Common myeloid progenitor, CD34-positive (primary cell): ENCODE measurements at regions of chr20 and their contacts with region 1.

Region 1: GRCh38 chr20:36808317-36809257 is 35.0 kb upstream of the DSN1 start:
- DNase-seq: peak; percentile 56 to 70 (median 60)
- H3K4me3 ChIP-seq: no peak overlapping the region
- H3K27ac ChIP-seq: no peak overlapping the region
- H3K4me1 ChIP-seq: no peaks in the 10 kb centered on the region
- H3K27me3 ChIP-seq: no peaks in the 10 kb centered on the region

Region 2: GRCh38 chr20:36235892-36236785 is 572.4 kb before region 1 on chr20 and contains the start of gene AAR2:
- CTCF ChIA-PET with region 1: no interaction called
- POLR2A ChIA-PET with region 1: no interaction called
- DNase-seq: peak; percentile 62 to 81 (median 76)
- H3K4me3 ChIP-seq: peak within 1 kb of the TSS; percentile 71 to 97 (median 86)
- H3K27ac ChIP-seq: peak within 1 kb of the TSS; percentile 88 to 91
- H3K4me1 ChIP-seq: peaks cover 5 to 27% (median 18%) of the 10 kb centered on the region in 4 experiments
- H3K27me3 ChIP-seq: no peaks in the 10 kb centered on the region

Region 3: GRCh38 chr20:36819659-36820058 is 11.1 kb after region 1 on chr20:
- CTCF ChIA-PET with region 1: interaction called, 11 read pairs
- POLR2A ChIA-PET with region 1: no interaction called
- DNase-seq: no peak
- H3K4me3 ChIP-seq: no peak overlapping the region
- H3K27ac ChIP-seq: no peak overlapping the region
- H3K4me1 ChIP-seq: no peaks in the 10 kb centered on the region
- H3K27me3 ChIP-seq: no peaks in the 10 kb centered on the region

Region 4: GRCh38 chr20:36856691-36857635 is 48.4 kb after region 1 on chr20:
- CTCF ChIA-PET with region 1: interaction called, 10 read pairs
- POLR2A ChIA-PET with region 1: interaction called, 3 read pairs
- DNase-seq: peak; percentile 88 to 95 (median 94)
- H3K4me3 ChIP-seq: peak overlapping the region in 1 of 7 experiments; percentile 12
- H3K27ac ChIP-seq: peak overlapping the region in 1 of 2 experiments; percentile 71
- H3K4me1 ChIP-seq: peaks cover 0 to 30% (median 27%) of the 10 kb centered on the region in 4 experiments
- H3K27me3 ChIP-seq: no peaks in the 10 kb centered on the region